GM12878 (cell line): ENCODE measurements at regions of chr11 and their contacts with region 1.

Region 1: DNA sequence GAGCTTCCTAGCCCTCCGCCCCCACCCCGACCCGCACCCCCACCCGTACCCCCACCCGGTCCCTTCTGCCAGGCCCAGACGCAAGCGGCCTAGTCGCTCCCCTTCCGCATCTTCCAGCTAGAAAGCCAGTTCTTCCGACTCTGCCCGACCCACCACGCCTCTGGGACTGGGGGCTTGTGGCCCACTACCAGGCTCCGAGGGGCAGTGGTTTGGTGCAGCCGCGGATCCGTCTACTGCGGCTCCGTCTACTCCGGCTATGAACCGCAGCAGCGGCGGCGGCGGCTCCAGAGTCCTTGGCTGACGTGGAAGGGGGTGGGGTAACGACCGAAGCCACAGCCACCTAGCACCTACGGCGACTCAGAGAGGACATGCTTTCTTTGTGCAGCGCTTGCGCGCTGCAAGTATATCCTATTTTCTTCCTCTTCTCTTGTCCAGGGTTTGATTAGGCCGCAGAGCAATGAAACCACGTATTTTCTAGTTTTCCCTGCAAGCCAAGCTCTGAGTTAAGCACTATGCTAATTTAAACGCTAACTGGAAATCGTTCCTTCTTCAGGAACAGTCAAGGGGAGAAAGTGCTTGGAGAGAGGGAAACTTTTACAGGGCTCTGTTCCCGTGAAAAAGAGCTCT is at the start of gene COPB1:
- DNase-seq: peak; percentile 77
- ATAC-seq: peak; percentile 94
- H3K4me3 ChIP-seq: peak within 1 kb of the TSS; percentile 89
- H3K27ac ChIP-seq: peak within 1 kb of the TSS; percentile 87
- H3K4me1 ChIP-seq: no peaks in the 10 kb centered on the region
- H3K27me3 ChIP-seq: no peaks in the 10 kb centered on the region
- CTCF ChIP-seq: no peak
- EP300 ChIP-seq: no peak
- POLR2A ChIP-seq: peak; percentile 99
- RAD21 ChIP-seq: no peak
- polyA plus RNA-seq, gene COPB1: 74.4 to 101 TPM

Region 2: DNA sequence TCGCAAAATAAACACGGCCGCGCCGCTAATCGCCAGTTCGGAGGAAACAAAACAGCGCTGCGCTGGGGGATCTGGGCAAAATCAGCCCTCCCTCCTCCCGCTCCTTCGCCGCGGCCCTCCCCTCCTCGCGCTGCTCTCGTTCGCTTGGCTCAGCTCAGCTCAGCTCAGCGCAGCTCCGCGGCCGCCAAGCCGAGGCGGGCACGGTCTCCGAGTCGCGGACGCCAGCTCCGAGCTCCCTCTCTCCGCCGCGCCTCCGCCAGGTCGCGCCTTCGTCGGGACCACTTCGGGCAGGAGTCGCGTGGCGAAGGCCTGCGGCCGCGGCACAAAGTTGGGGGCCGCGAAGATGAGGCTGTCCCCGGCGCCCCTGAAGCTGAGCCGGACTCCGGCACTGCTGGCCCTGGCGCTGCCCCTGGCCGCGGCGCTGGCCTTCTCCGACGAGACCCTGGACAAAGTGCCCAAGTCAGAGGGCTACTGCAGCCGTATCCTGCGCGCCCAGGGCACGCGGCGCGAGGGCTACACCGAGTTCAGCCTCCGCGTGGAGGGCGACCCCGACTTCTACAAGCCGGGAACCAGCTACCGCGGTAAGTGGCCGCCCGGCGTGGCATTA is 537.0 kb before region 1 on chr11 and contains the start of gene SPON1:
- CTCF ChIA-PET with region 1: no interaction called
- POLR2A ChIA-PET with region 1: no interaction called
- RAD21 ChIA-PET with region 1: no interaction called
- SMC1A ChIA-PET with region 1: no interaction called
- in situ Hi-C with region 1: no loop called
- intact Hi-C with region 1: no loop called
- DNase-seq: no peak
- ATAC-seq: no peak
- H3K4me3 ChIP-seq: no peak within 1 kb of the TSS
- H3K27ac ChIP-seq: no peak within 1 kb of the TSS
- H3K4me1 ChIP-seq: no peaks in the 10 kb centered on the region
- H3K27me3 ChIP-seq: peaks cover 10 to 14% of the 10 kb centered on the region in 2 experiments
- CTCF ChIP-seq: no peak
- EP300 ChIP-seq: no peak
- POLR2A ChIP-seq: no peak
- RAD21 ChIP-seq: no peak
- polyA plus RNA-seq, gene SPON1: 0.16 to 0.18 TPM

Region 3: DNA sequence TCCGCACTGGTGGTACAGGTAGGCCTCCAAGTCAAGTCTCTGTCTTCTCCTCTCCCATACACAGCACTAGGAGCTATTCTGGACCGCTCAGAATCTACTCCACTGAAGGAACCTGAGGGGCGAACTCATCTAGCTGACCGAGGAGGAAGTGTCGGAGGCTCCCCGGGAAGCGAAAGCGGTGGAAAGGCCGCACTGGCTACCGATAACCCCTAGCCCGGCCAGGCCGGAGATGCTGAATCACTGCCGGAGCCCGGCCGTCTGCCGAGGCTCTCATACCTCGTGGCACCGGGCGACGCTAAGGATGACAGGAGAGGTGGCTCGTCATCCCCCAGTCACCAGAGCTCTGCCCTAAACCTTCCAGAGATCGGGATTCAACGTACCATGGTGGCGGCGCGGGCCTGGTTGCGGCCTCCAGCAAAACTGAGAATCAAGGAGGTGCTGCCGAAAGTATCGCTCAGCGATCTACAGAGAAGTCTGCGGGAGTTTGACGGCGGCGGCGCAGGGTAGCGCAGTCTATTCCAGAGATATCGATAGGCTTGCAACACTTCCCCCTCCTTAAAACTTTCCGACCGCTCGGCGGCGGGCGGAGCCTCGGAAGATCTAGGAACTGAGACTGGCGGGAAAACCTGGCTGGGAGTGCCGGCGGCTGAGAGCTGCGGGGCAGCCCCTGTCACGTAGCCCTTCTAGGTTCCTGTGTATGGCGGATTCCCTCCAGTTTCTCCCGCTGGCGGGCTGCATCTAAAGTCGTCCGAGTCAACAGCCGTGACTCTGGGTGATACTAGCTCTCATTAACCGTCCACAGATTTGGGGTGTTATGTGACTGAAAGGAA is 20.5 kb after region 1 on chr11 and contains the start of gene PSMA1:
- CTCF ChIA-PET with region 1: interaction called, 4 read pairs
- POLR2A ChIA-PET with region 1: interaction called, 34 read pairs
- RAD21 ChIA-PET with region 1: interaction called, 21 read pairs
- SMC1A ChIA-PET with region 1: interaction called, 11 read pairs
- in situ Hi-C with region 1: no loop called
- intact Hi-C with region 1: loop called (anchors 2 kb)
- DNase-seq: peak; percentile 76
- ATAC-seq: peak; percentile 93
- H3K4me3 ChIP-seq: peak within 1 kb of the TSS; percentile 95
- H3K27ac ChIP-seq: peak within 1 kb of the TSS; percentile 89
- H3K4me1 ChIP-seq: no peaks in the 10 kb centered on the region
- H3K27me3 ChIP-seq: no peaks in the 10 kb centered on the region
- CTCF ChIP-seq: no peak
- EP300 ChIP-seq: peak in 1 of 2 experiments; percentile 42; a peak in 1 of 4 replicates
- POLR2A ChIP-seq: peak; percentile 92
- RAD21 ChIP-seq: no peak
- polyA plus RNA-seq, gene PSMA1: 611 to 678 TPM